ENCODE measurements at regions of chr9 and their contacts with region 1.

Region 1: GRCh38 chr9:35646533-35647265 is 4.0 kb downstream of the SIT1 start:
- DNase-seq: peak; percentile 96
- ATAC-seq: peak; percentile 84
- H3K4me3 Mint-ChIP-seq: peak overlapping the region; percentile 91
- H3K27ac Mint-ChIP-seq: peak overlapping the region; percentile 97
- H3K4me1 Mint-ChIP-seq: peaks cover 51% of the 10 kb centered on the region
- H3K27me3 Mint-ChIP-seq: no peaks in the 10 kb centered on the region

Region 2: GRCh38 chr9:35111001-35111933 is 535.4 kb before region 1 on chr9:
- CTCF ChIA-PET with region 1: interaction called, 4 read pairs
- POLR2A ChIA-PET with region 1: no interaction called
- intact Hi-C with region 1: loop called (anchors 5 to 10 kb)
- DNase-seq: peak; percentile 98
- ATAC-seq: peak; percentile 82
- H3K4me3 Mint-ChIP-seq: peak overlapping the region; percentile 63
- H3K27ac Mint-ChIP-seq: peak overlapping the region; percentile 90
- H3K4me1 Mint-ChIP-seq: peaks cover 48% of the 10 kb centered on the region
- H3K27me3 Mint-ChIP-seq: no peaks in the 10 kb centered on the region

Region 3: DNA sequence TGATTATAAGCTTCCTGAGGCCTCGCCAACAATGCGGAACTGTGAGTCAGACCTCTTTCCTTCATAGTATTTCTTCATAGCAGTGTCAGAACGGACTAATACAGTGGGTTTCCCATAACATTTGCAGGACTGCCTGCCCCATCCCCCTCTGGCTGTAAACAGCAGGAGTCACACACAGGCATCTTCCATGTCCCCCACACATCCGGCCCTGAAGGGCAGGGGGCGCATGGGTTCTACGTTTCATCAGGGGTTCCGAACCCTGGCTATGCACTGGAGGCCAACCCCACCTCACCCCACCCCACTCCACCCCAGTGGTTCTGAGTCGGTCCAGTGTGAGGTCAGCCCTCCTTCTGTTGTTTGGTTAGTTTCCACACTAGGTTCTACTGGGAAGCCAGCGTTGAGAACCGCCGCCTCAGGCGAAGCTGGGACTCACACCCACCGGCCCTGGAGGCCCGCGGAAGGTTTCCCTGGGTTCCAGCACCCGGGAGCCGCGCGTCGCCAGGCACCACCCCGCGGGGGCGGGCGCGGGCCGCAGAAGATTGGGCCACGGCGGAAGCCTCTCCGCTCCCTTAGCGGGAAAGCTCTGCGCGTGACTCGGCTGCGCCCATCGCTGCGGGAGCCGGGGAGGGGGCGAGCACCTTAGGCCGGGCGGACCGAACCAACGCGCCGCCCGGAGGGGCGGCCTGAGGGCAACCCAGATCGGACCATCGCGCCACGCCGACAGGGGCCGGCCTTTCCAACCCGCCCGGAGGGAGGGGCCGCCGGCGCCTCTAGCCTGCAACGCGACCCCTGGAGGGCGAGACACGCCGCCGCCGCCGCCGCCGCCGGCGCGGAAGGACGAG is 157.2 kb before region 1 on chr9 and contains the start of gene RUSC2:
- CTCF ChIA-PET with region 1: interaction called, 3 read pairs
- POLR2A ChIA-PET with region 1: no interaction called
- intact Hi-C with region 1: loop called in 1 of 2 experiments (anchors 1 kb)
- DNase-seq: peak; percentile 82
- ATAC-seq: peak; percentile 72
- H3K4me3 Mint-ChIP-seq: peak within 1 kb of the TSS; percentile 76
- H3K27ac Mint-ChIP-seq: peak within 1 kb of the TSS; percentile 79
- H3K4me1 Mint-ChIP-seq: peaks cover 31% of the 10 kb centered on the region
- H3K27me3 Mint-ChIP-seq: peaks cover 9% of the 10 kb centered on the region
- total RNA-seq, gene RUSC2: 5.7 to 6.5 TPM

Region 4: DNA sequence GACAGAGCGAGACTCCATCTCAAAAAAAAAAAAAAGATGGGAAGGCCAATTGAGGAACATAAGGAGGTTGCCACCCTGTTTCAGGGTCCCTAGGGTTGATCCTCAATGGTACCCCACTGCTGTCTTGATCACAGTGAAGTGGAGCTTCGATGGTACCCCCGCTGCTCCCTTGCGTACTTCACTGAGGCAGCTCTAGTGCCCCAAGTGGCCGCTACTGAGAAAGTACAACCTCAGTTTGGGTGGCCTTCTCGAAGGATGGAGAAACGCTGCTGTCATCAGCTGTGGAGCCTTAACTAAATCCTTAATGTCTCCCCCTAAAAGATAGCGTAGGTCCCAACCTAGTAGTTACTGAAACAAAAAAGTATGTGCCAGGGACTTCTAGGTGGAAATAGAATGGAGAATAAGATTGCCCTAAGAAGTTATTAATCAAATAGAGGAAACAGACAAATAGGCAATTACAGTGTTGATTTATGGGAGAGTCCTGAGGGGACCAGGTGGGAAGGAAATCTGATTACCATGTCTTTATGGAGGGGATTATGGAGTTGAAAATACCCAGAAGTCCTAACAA is 35.4 kb before region 1 on chr9:
- CTCF ChIA-PET with region 1: interaction called, 29 read pairs
- POLR2A ChIA-PET with region 1: no interaction called
- intact Hi-C with region 1: no loop called
- DNase-seq: peak; percentile 74
- ATAC-seq: peak; percentile 96
- H3K4me3 Mint-ChIP-seq: no peak overlapping the region
- H3K27ac Mint-ChIP-seq: no peak overlapping the region
- H3K4me1 Mint-ChIP-seq: peaks cover 13% of the 10 kb centered on the region
- H3K27me3 Mint-ChIP-seq: no peaks in the 10 kb centered on the region

Region 5: DNA sequence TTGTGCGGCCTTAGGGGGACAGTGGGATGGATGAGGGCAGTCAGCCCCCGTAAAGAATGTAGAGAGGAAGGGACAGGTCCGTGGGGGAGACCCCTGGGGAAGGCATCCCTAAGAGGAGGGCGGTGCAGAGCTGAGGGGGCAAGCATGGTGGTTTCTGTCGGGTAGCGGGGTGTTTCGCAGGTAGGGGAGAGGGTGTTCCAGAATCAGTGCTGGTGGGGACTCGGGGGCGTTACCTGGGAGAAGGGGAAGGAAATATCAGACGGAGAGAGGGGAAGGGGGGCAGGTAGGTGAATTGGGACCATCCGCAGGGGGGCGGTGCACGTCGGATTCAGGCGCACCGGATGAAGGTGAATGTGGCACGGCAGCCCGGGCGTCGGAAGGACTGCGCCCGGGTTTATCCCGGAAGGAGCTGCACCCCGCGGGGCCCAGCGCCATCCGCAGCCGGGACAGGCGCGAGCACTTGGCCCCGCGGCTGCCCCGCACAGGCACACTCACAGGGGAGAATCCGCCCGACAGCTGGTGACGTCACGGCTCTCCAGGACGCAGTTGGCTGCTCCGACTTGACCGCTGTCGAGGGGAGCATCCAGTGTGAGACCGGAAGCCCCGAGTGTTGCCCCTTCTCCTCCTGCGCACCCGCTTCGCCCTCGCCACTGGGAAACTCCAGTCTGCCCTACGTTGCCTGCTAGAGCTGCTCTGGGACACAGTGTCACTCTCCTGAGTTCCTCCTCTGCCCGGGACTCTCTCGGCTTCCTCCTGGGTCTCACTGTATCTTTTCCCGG is 29.8 kb before region 1 on chr9:
- CTCF ChIA-PET with region 1: interaction called, 29 read pairs
- POLR2A ChIA-PET with region 1: no interaction called
- intact Hi-C with region 1: loop called in 1 of 2 experiments (anchors 1 kb)
- DNase-seq: peak; percentile 80
- ATAC-seq: peak; percentile 74
- H3K4me3 Mint-ChIP-seq: peak overlapping the region; percentile 77
- H3K27ac Mint-ChIP-seq: peak overlapping the region; percentile 79
- H3K4me1 Mint-ChIP-seq: peaks cover 38% of the 10 kb centered on the region
- H3K27me3 Mint-ChIP-seq: no peaks in the 10 kb centered on the region

Region 6: DNA sequence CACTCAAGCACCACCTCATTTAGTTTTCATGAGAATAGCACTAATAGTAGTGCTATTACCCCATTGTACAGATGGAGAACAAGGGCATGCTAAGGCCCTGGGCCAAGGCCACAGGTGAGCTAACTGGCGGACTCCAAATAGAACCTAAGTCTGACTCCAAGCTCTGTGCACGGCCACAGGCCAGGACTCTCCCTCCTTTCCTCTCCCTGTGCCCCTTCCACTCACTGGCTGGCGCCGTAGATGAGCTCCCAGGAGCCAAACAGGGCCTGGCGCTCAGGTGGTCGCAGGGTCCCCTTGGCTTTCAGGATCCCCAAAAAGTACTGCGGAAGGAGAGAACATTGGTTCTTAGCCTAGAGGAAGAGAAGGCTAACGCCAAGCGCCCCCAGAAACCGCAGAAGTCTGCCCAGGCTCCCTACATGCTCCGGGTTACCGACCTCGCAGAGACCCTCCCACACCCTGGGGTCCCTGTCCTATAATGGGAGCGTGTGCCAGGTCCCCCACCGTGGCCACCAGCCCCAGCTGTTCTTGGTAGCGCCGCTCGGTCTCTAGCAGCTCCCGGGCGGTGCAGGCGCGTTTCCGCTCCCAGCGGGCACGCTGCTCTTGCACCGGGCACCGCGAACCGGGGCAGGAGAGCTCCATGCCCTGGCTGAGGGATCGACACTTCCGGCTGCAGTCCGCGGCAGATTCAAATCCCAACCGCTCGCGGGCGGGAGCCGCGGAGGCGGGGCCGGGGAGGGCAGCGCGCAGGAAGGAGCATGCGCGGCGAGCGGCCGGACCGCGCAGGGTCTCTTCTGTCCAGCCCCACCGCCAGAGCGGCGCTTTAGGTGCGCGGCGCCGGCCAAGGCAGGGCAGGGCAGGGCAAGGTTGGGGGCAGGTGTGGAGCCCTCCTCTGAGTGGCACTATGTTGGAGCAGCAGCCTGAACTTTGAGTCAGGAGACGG is 18.1 kb after region 1 on chr9 and contains the start of gene ARHGEF39:
- CTCF ChIA-PET with region 1: interaction called, 89 read pairs
- POLR2A ChIA-PET with region 1: interaction called, 7 read pairs
- intact Hi-C with region 1: no loop called
- DNase-seq: peak; percentile 86
- ATAC-seq: peak; percentile 92
- H3K4me3 Mint-ChIP-seq: peak within 1 kb of the TSS; percentile 75
- H3K27ac Mint-ChIP-seq: peak within 1 kb of the TSS; percentile 59
- H3K4me1 Mint-ChIP-seq: peaks cover 47% of the 10 kb centered on the region
- H3K27me3 Mint-ChIP-seq: no peaks in the 10 kb centered on the region
- total RNA-seq, gene ARHGEF39: 19.1 to 23.1 TPM

Region 7: GRCh38 chr9:35696525-35697215 is 50.0 kb after region 1 on chr9:
- CTCF ChIA-PET with region 1: interaction called, 30 read pairs
- POLR2A ChIA-PET with region 1: no interaction called
- intact Hi-C with region 1: no loop called
- DNase-seq: peak; percentile 73
- ATAC-seq: peak; percentile 90
- H3K4me3 Mint-ChIP-seq: no peak overlapping the region
- H3K27ac Mint-ChIP-seq: no peak overlapping the region
- H3K4me1 Mint-ChIP-seq: peaks cover 1% of the 10 kb centered on the region
- H3K27me3 Mint-ChIP-seq: no peaks in the 10 kb centered on the region

Measured in activated CD4-positive, alpha-beta T cell treated with anti-CD3 and anti-CD28 coated beads for 36 hours (primary cell).